ENCODE measurements at regions of chr10 and their contacts with region 1.

Region 1: DNA sequence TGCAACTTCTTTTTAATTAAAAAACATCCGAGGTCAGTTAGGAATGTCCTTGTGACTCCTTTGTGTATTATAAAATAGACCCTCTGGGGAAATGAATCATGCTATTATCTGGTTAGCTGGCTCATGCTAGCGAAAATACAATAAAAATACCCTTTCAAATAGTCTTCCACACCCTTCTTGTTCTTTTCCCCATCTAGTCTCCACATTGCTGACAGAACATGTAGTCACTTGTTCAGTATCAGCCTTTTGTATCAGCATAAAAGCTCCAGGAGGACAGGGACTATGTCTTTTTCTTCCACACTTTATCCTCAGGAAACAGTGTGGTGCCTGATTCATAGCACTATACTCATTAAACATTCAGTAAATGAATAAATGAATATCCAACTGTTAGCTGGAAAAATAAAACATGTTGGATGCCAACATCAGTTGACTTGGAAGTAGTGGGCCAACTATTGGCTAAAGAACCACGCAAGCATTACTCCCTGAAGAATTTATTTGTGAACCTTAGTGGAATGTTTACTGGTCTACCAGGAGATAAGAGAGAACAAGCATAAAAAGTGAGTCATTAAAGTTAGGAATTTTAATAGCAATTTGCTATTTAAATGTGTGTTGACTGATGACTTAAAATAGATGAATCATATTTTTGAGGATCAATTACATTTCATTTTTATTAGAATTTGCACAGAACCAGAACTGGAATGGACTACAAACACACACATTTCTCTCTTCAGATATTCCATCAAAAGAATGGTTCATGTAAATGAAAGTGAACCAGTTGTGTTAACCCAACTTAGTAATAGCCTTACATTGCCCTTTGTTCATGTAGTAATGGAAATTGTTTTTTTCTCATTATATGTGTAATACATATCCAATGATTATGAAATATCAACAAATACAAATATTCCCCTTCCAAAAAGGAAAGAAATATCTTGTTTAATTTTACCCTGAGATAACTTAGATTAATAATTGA is 129.6 kb downstream of the DKK1 start:
- DNase-seq: peak; percentile 98
- H3K4me3 ChIP-seq: peak overlapping the region in 1 of 3 experiments; percentile 25
- H3K27ac ChIP-seq: peak overlapping the region; percentile 96
- H3K4me1 ChIP-seq: peaks cover 39% of the 10 kb centered on the region
- H3K27me3 ChIP-seq: no peaks in the 10 kb centered on the region
- CTCF ChIP-seq: no peak

Region 2: DNA sequence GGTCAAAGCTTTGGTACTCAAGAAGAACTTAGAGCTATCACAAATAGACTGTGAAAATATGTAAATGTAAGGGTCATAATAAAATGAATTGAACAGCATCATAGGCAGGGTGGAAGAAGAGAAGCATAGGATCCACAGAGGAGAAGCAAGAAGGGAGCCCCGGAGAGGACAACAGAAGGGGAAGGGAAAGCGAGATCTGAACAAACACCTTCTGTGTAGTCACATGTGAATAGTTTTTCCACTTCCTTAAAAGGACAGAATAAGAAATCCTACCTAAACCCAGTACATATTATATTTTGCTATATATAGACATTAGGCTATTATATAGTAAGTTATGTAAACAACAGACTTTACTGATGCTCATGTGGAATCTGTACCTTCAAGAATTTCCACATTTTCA is 30.6 kb after region 1 on chr10:
- CTCF ChIA-PET with region 1: no interaction called
- dilution Hi-C with region 1: no loop called
- in situ Hi-C with region 1: no loop called
- intact Hi-C with region 1: loop called (anchors 1 kb)
- DNase-seq: no peak
- H3K4me3 ChIP-seq: no peak overlapping the region
- H3K27ac ChIP-seq: no peak overlapping the region
- H3K4me1 ChIP-seq: peaks cover 10% of the 10 kb centered on the region
- H3K27me3 ChIP-seq: no peaks in the 10 kb centered on the region
- CTCF ChIP-seq: no peak